PC-9 (cell line): ENCODE measurements at regions of chr19 and their contacts with region 1.

Region 1: DNA sequence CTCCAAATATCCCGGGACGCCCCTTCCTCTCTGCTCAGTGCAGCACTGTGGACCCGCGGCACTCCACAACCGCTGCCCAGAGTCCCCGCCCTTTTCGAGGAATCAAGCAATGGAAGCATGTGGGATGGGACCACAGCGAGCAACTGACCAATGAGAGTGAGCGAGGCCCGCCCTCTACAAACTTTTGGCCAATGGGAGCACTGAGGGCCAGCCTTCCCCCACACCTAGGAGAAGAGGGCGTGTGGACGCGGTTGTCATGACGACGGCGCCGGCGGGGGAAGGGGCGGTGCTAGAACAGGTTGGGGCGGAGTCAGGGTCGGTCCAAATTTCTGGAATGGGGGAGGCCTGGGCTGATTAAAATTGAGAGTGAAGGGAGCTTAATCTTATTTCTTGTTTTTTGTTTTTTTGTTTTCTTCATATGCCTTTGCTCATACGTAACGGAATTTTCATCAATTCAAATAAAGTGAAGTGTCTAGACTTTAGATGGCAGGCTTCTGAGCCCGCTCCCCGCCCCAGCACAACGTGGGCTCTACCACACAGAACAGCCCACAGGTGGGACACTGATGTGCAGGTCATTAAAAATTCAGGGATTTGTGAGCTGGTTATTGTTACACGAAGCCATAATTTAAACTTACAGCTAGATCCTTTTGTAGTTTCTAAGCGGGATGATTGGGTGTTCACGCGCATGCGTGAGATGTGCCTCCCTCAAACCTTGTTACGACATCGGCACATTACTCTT is at the start of gene DNAAF3:
- DNase-seq: peak; percentile 96 to 99
- H3K4me3 ChIP-seq: peak within 1 kb of the TSS; percentile 70
- H3K27ac ChIP-seq: peak within 1 kb of the TSS; percentile 71
- H3K4me1 ChIP-seq: peaks cover 13% of the 10 kb centered on the region
- H3K27me3 ChIP-seq: no peaks in the 10 kb centered on the region
- CTCF ChIP-seq: no peak
- total RNA-seq, gene DNAAF3: 51.8 and 76.6 TPM in 2 replicates

Region 2: DNA sequence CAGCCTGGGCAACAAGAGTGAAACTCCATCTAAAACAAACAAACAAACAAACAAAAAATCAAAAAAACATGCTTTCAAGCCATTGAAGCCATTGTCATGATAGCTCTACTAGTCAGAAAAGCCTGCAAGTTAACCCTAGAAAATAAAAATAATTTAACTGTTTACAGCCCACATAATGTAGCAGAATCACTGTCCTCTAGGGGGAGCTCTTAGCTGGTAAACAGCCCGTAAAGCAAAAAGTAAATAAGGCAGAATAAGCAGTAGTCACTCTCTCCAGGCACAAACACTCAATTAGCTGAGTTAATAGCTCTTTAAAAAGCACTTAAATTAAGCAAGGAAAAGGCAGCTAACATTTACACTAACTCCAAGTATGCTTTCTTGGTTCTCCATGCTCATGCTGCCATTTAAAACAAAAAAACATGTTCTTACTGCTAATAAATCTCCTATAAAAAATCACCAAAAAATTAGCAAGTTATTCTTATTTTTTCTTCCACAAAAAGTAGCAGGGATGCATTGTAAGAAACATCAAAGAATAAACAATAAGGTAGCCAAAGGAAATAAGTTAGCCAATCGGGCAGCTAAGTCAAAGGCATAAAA is 492.6 kb before region 1 on chr19:
- CTCF ChIA-PET with region 1: no interaction called
- POLR2A ChIA-PET with region 1: no interaction called
- intact Hi-C with region 1: loop called (anchors 10 kb)
- DNase-seq: peak in 1 of 2 experiments; percentile 14
- H3K4me3 ChIP-seq: no peak overlapping the region
- H3K27ac ChIP-seq: no peak overlapping the region
- H3K4me1 ChIP-seq: no peaks in the 10 kb centered on the region
- H3K27me3 ChIP-seq: peaks cover 53% of the 10 kb centered on the region
- CTCF ChIP-seq: peak; percentile 92

Region 3: DNA sequence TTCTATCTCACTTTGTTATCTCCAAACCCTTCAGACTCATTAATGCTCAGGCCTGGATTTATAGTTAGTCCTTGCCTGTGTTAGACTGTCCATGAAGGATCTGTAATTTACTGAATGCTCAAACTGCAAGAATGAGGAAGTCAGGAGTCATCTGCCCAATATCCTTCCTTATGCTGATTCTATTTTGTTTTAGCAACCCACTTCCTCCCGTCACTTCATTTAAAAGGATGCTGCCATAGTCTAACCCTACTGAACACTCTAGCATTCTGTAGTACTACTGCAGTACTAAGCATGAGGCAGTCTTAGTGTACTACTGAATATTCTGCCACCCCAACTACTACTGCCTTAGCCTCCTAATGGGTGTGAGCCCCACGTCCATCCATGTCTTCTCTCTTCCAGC is 291.2 kb before region 1 on chr19:
- CTCF ChIA-PET with region 1: no interaction called
- POLR2A ChIA-PET with region 1: no interaction called
- intact Hi-C with region 1: no loop called
- DNase-seq: no peak
- H3K4me3 ChIP-seq: no peak overlapping the region
- H3K27ac ChIP-seq: no peak overlapping the region
- H3K4me1 ChIP-seq: no peaks in the 10 kb centered on the region
- H3K27me3 ChIP-seq: peaks cover 90% of the 10 kb centered on the region
- CTCF ChIP-seq: no peak

Region 4: GRCh38 chr19:55206664-55207500 is 40.2 kb after region 1 on chr19:
- CTCF ChIA-PET with region 1: interaction called, 5 read pairs
- POLR2A ChIA-PET with region 1: interaction called, 5 read pairs
- intact Hi-C with region 1: loop called (anchors 1 kb)
- DNase-seq: peak; percentile 89 to 95
- H3K4me3 ChIP-seq: peak overlapping the region; percentile 24; the same call in 1 of the 2 replicates
- H3K27ac ChIP-seq: peak overlapping the region; percentile 80
- H3K4me1 ChIP-seq: peaks cover 40% of the 10 kb centered on the region
- H3K27me3 ChIP-seq: no peaks in the 10 kb centered on the region
- CTCF ChIP-seq: no peak

Region 5: DNA sequence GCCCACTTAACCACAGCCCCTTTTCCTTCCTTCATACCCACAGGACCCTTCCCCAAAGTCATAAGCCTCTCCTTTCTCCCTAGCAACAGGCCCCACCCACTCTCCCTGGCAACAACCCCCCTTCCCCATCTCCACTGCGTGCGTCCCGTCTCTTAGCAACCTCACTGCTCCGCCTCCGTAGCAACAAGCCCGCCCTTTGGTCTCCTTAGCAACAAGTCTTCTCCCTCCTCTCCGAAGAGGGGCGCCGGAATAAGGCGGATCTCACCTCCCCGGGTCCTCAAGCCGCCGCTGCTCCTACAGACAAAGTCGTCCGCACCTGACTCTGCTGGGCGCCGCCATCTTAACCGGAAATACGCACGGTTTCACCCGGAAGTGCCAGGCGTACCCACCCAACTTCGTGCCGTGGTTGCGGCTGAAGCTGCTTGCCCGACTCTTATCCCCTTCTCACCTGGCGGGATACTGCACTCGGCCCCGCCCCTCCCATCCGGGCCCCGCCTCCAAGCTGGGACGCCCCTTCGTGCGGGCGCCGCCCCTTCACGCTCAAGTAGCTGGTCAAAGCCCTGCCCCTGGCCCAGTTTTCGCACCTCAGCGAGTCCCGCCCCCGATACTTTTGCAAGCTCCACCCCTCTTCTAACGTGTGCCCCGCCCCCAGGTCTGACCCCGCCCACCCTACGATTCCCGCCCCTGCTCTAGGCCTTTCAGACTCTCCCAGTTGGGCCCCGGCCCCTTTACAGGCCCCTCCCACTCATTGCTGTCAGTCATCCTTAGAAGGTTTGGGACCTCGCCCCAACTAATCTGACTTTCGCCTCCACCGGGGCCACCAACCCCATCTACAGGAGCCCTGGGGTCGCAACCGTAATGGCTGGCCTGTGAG is 113.3 kb after region 1 on chr19 and contains the start of gene HSPBP1:
- CTCF ChIA-PET with region 1: no interaction called
- POLR2A ChIA-PET with region 1: interaction called, 10 read pairs
- intact Hi-C with region 1: no loop called
- DNase-seq: peak; percentile 94 to 100
- H3K4me3 ChIP-seq: peak within 1 kb of the TSS; percentile 94
- H3K27ac ChIP-seq: peak within 1 kb of the TSS; percentile 72
- H3K4me1 ChIP-seq: peaks cover 8% of the 10 kb centered on the region; the same call in 1 of the 2 replicates
- H3K27me3 ChIP-seq: peaks cover 4% of the 10 kb centered on the region; the same call in 1 of the 2 replicates
- CTCF ChIP-seq: no peak
- total RNA-seq, gene HSPBP1: 66.2 and 79.6 TPM in 2 replicates

Region 6: GRCh38 chr19:55339048-55339888 is 172.6 kb after region 1 on chr19 and contains the start of gene KMT5C:
- CTCF ChIA-PET with region 1: interaction called, 3 read pairs
- POLR2A ChIA-PET with region 1: interaction called, 3 read pairs
- intact Hi-C with region 1: loop called (anchors 1 kb)
- DNase-seq: peak; percentile 100
- H3K4me3 ChIP-seq: peak within 1 kb of the TSS; percentile 86
- H3K27ac ChIP-seq: peak within 1 kb of the TSS; percentile 97
- H3K4me1 ChIP-seq: peaks cover 14% of the 10 kb centered on the region
- H3K27me3 ChIP-seq: no peaks in the 10 kb centered on the region
- CTCF ChIP-seq: no peak
- total RNA-seq, gene KMT5C: 71.6 and 80.7 TPM in 2 replicates

Region 7: GRCh38 chr19:55599468-55600279 is 433.0 kb after region 1 on chr19 and contains the start of gene FIZ1:
- CTCF ChIA-PET with region 1: no interaction called
- POLR2A ChIA-PET with region 1: no interaction called
- intact Hi-C with region 1: loop called (anchors 5 kb)
- DNase-seq: peak; percentile 93 to 98
- H3K4me3 ChIP-seq: peak within 1 kb of the TSS; percentile 91
- H3K27ac ChIP-seq: peak within 1 kb of the TSS; percentile 94
- H3K4me1 ChIP-seq: peaks cover 22% of the 10 kb centered on the region
- H3K27me3 ChIP-seq: no peaks in the 10 kb centered on the region
- CTCF ChIP-seq: 0 out of 2 replicates have a peak, but pooled peaks have one; percentile 16
- total RNA-seq, gene FIZ1: 25.2 and 25.4 TPM in 2 replicates